GM10248 (cell line): ENCODE measurements at regions of chr2 and their contacts with region 1.

Region 1: GRCh38 chr2:97950329-97951154 is 45.2 kb downstream of the TMEM131 start:
- DNase-seq: no peak
- CTCF ChIP-seq: no peak

Region 2: DNA sequence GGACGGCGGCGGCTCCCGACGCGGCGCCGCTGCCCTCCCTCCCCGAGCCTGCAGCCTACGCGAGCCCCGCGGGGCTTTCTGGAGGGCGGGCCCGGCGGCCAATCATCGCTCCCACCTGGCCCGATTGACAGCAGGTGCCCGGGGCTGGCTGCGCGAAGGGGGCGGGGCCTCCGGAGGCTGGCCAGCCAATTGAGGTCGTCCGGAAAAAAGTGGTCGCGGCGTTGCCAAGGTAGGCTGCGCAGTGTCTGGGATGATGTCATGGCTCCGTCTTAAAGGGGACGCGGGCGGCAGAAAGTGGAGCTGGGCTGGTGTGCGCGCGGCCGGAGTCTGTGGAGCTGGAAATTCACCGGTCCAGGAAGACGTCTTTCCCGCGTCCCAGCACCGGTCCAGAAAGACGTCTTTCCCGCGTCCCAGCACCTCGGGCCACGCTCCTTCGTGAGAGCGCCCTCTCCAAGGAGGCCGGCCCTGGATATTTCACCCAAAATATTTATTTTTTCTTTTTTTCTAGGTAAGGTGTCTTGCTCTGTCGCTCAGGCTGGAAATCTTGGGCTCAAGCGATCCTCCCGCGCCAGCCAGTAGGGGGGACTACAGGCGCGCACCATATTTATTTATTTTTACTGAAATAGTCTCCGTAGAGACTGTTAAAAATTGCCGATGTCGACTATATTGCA is 286.4 kb before region 1 on chr2 and contains the start of gene ACTR1B:
- CTCF ChIA-PET with region 1: no interaction called
- POLR2A ChIA-PET with region 1: no interaction called
- DNase-seq: peak; percentile 98
- CTCF ChIP-seq: peak; percentile 63

Region 3: GRCh38 chr2:97963880-97964279 is 13.3 kb after region 1 on chr2:
- CTCF ChIA-PET with region 1: interaction called, 15 read pairs
- POLR2A ChIA-PET with region 1: no interaction called
- DNase-seq: no peak
- CTCF ChIP-seq: no peak

Region 4: GRCh38 chr2:97979894-97980293 is 29.4 kb after region 1 on chr2:
- CTCF ChIA-PET with region 1: no interaction called
- POLR2A ChIA-PET with region 1: no interaction called
- DNase-seq: no peak
- CTCF ChIP-seq: no peak

Region 5: GRCh38 chr2:98036349-98037000 is 85.9 kb after region 1 on chr2:
- CTCF ChIA-PET with region 1: no interaction called
- POLR2A ChIA-PET with region 1: no interaction called
- DNase-seq: no peak
- CTCF ChIP-seq: no peak